ENCODE measurements at regions of chr5 and their contacts with region 1.

Region 1: GRCh38 chr5:141512390-141512910 is 23.6 kb downstream of the PCDHGC5 start:
- DNase-seq: peak; percentile 64 to 88 (median 77)
- ATAC-seq: peak; percentile 52 to 58
- H3K4me3 Mint-ChIP-seq: peak overlapping the region; percentile 82 to 95 (median 90)
- H3K27ac Mint-ChIP-seq: peak overlapping the region in 9 of 10 donors; percentile 40 to 91 (median 82)
- H3K4me1 Mint-ChIP-seq: peaks cover 24 to 57% (median 49%) of the 10 kb centered on the region in 4 donors
- H3K27me3 Mint-ChIP-seq: no peaks in the 10 kb centered on the region

Region 2: GRCh38 chr5:141320225-141321169 is 192.0 kb before region 1 on chr5 and contains the start of gene TAF7:
- POLR2A ChIA-PET with region 1: interaction called, 13 read pairs
- DNase-seq: peak; percentile 86 to 96 (median 90)
- ATAC-seq: peak; percentile 88 to 89
- H3K4me3 Mint-ChIP-seq: peak within 1 kb of the TSS; percentile 92 to 100 (median 98)
- H3K27ac Mint-ChIP-seq: peak within 1 kb of the TSS; percentile 97 to 100 (median 99)
- H3K4me1 Mint-ChIP-seq: peaks cover 20 to 31% (median 28%) of the 10 kb centered on the region in 4 donors
- H3K27me3 Mint-ChIP-seq: peaks cover 0 to 4% (median 1%) of the 10 kb centered on the region in 5 donors
- polyA plus RNA-seq, gene TAF7: 206 to 230 (median 230) TPM